ENCODE measurements at regions of chr15 and their contacts with region 1.

Region 1: GRCh38 chr15:85592148-85592547 is 202.6 kb downstream of the KLHL25 start:
- DNase-seq: peak; percentile 96
- ATAC-seq: peak; percentile 66
- H3K4me3 ChIP-seq: no peak overlapping the region
- H3K27ac ChIP-seq: peak overlapping the region; percentile 96
- H3K4me1 ChIP-seq: peaks cover 69% of the 10 kb centered on the region
- H3K27me3 ChIP-seq: no peaks in the 10 kb centered on the region
- CTCF ChIP-seq: peak; percentile 71

Region 2: DNA sequence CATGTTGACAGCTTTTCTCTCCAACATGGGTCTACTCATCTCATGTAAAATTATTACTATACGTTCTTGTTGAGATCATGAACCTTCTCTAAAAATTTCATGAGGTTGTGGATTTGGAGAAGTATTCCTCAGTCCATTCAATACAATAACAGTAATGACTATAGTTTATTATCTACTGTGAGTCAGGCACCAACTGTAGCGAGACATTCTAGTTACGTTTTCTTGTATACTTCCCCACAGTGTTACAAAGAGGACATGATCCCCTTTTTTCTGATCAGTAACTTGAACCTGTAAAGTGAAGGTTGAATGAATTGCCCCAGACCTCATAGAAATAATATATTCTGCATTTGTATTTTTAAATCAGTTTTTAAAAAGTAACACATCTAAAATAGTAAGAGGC is 135.3 kb before region 1 on chr15:
- CTCF ChIA-PET with region 1: no interaction called
- POLR2A ChIA-PET with region 1: no interaction called
- intact Hi-C with region 1: no loop called
- DNase-seq: no peak
- ATAC-seq: no peak
- H3K4me3 ChIP-seq: no peak overlapping the region
- H3K27ac ChIP-seq: no peak overlapping the region
- H3K4me1 ChIP-seq: peaks cover 8% of the 10 kb centered on the region
- H3K27me3 ChIP-seq: no peaks in the 10 kb centered on the region
- CTCF ChIP-seq: no peak

Region 3: GRCh38 chr15:85482894-85483293 is 109.3 kb before region 1 on chr15:
- CTCF ChIA-PET with region 1: no interaction called
- POLR2A ChIA-PET with region 1: no interaction called
- intact Hi-C with region 1: no loop called
- DNase-seq: no peak
- ATAC-seq: no peak
- H3K4me3 ChIP-seq: no peak overlapping the region
- H3K27ac ChIP-seq: no peak overlapping the region
- H3K4me1 ChIP-seq: peaks cover 14% of the 10 kb centered on the region
- H3K27me3 ChIP-seq: no peaks in the 10 kb centered on the region
- CTCF ChIP-seq: no peak

Region 4: DNA sequence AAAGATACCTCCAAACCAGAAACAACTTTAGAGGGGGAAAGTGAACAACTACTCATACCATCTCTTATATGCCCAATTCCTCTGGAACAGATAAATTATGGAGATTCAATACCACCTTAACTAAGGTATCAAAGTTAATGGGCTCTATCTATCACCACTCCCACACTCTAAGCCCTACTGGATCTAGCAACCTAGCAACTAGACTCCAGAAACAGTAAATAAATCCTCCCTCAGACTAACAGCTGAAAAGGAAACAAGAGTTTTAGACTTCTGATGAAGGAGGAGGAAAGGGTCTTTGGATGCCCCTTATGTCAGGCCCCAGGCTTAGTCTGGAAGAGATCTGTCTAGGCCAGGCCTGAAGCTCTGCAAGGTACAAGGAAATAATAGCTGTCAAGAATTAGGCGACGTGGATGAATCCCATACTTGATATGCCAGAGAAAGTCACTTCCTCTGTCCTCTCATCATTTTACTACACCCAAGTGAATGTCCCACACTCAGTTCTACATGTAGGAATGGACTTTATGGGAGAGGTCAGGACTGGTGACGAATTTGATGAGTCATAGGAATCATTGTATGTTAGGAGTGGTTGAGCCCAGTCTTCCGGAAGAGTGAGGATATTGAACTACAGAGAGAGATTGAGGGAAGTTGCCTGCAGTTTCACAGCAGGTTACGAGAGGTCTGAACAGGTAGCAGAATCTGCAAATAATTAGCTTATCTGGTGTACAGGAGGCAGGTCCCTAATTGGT is 97.9 kb before region 1 on chr15:
- CTCF ChIA-PET with region 1: no interaction called
- POLR2A ChIA-PET with region 1: no interaction called
- intact Hi-C with region 1: loop called (anchors 5 kb)
- DNase-seq: peak; percentile 95
- ATAC-seq: peak; percentile 97
- H3K4me3 ChIP-seq: peak overlapping the region; percentile 42
- H3K27ac ChIP-seq: peak overlapping the region; percentile 97
- H3K4me1 ChIP-seq: peaks cover 23% of the 10 kb centered on the region
- H3K27me3 ChIP-seq: no peaks in the 10 kb centered on the region
- CTCF ChIP-seq: no peak

Region 5: DNA sequence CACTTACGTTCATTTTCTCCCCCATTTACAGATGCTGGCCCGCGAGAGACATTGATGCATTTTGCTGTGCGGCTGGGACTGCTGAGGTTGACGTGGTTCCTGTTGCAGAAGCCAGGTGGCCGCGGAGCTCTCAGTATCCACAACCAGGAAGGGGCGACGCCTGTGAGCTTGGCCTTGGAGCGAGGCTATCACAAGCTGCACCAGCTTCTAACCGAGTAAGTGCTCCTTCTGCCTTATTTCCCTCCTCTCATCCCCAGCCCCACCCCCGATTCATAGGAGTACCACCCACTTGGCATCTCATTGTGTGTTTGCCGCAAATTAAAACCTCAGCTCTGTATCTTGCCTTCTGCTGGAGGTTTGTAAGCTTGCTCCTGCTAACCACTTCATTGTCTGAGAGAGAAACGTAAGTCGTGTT is 48.4 kb before region 1 on chr15:
- CTCF ChIA-PET with region 1: no interaction called
- POLR2A ChIA-PET with region 1: no interaction called
- intact Hi-C with region 1: loop called (anchors 5 kb)
- DNase-seq: no peak
- ATAC-seq: no peak
- H3K4me3 ChIP-seq: no peak overlapping the region
- H3K27ac ChIP-seq: peak overlapping the region; percentile 46
- H3K4me1 ChIP-seq: peaks cover 48% of the 10 kb centered on the region
- H3K27me3 ChIP-seq: no peaks in the 10 kb centered on the region
- CTCF ChIP-seq: no peak

Region 6: DNA sequence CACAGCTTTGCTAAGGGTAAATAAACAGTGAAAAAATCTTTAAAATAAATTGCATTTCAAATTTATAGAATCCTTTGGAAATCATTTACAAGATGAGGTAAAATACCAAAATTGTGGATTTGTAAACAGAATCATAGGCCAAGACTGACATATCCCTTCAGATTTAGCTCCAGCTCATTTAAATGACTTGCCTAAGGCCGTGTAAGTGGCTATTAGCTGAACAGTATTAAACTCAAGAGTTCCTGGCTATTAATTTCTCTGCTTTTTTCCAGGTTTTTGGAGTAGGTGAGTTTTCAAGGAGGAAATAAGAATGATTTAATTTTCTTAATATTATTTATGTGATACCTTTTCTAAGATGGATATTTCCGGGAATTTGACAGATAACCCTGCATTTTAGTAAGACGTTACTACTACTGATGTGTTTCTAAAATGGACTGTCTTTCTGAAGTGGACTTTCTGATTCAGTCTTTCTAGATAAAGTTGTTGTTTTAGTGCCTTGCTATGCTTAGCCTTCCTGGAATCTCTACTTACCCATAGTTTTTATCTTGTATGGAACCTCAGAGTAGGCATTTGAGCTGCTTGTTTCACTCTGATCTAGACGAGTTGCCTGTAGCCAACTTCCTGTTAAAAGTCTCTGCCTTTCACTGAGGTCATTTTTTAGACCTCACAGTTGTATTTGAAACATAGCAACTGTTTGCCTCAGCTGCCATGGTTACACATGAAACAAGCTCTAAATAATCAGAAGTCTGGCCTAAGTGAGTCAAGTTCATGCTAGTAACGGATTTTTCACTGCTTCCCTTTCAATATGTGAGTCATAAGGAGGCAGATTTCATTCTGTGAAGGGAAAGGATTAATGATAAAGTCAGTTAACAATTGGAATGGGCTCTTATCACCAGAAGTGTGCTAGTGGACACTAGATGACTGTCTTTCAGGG is 75.6 kb after region 1 on chr15:
- CTCF ChIA-PET with region 1: no interaction called
- POLR2A ChIA-PET with region 1: no interaction called
- intact Hi-C with region 1: loop called (anchors 2 kb)
- DNase-seq: peak; percentile 83
- ATAC-seq: peak; percentile 95
- H3K4me3 ChIP-seq: no peak overlapping the region
- H3K27ac ChIP-seq: peak overlapping the region; percentile 80
- H3K4me1 ChIP-seq: peaks cover 14% of the 10 kb centered on the region
- H3K27me3 ChIP-seq: no peaks in the 10 kb centered on the region
- CTCF ChIP-seq: no peak

Measured in PC-3 (cell line).